Thyroid gland (tissue), 4 donors: ENCODE measurements at regions of chr1 and their contacts with region 1.

Region 1: DNA sequence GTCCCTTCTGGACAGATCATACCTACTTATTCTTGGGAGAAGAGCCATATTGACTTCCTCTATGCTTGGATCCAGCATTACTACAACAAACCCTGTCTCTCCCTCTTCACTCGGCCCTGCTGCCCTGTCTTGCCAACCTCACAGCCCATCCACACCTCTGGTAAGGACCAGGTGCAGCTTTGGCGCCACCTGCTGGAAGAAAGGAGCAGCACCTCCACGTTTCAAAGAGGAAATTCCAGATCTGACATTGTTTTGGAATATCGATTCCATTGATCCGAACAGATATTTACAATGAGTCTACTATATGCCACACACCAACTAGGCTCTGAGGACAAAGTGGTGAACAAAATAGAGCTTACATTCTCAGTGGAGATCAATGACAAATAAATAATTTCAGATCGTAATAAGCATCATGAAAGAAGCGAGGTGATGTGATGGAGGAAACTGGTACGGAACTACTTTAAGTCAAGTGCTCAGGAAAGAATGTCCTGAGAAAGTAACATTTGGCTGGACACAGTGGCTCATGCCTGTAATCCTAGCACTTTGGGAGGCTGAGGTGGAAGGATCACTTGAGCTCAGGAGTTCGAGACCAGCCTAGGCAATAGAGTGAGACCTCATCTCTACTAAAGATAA is 18.7 kb downstream of the MFSD2A start:
- DNase-seq: peak; percentile 79 to 85
- H3K4me3 ChIP-seq: no peak overlapping the region
- H3K27ac ChIP-seq: no peak overlapping the region
- H3K4me1 ChIP-seq: peaks cover 0 to 8% of the 10 kb centered on the region in 2 donors
- H3K27me3 ChIP-seq: no peaks in the 10 kb centered on the region
- CTCF ChIP-seq: peak; percentile 87 to 98 (median 95)
- POLR2A ChIP-seq: no peak

Region 2: GRCh38 chr1:39919545-39919944 is 54.1 kb before region 1 on chr1:
- intact Hi-C with region 1: loop called (anchors 5 kb)
- DNase-seq: peak; percentile 51 to 62
- H3K4me3 ChIP-seq: no peak overlapping the region
- H3K27ac ChIP-seq: no peak overlapping the region
- H3K4me1 ChIP-seq: no peaks in the 10 kb centered on the region
- H3K27me3 ChIP-seq: no peaks in the 10 kb centered on the region
- CTCF ChIP-seq: peak in 5 of 6 experiments; percentile 20 to 84 (median 63)
- POLR2A ChIP-seq: no peak